Ascending aorta (tissue), 2 donors: ENCODE measurements at regions of chr14 and their contacts with region 1.

Region 1: DNA sequence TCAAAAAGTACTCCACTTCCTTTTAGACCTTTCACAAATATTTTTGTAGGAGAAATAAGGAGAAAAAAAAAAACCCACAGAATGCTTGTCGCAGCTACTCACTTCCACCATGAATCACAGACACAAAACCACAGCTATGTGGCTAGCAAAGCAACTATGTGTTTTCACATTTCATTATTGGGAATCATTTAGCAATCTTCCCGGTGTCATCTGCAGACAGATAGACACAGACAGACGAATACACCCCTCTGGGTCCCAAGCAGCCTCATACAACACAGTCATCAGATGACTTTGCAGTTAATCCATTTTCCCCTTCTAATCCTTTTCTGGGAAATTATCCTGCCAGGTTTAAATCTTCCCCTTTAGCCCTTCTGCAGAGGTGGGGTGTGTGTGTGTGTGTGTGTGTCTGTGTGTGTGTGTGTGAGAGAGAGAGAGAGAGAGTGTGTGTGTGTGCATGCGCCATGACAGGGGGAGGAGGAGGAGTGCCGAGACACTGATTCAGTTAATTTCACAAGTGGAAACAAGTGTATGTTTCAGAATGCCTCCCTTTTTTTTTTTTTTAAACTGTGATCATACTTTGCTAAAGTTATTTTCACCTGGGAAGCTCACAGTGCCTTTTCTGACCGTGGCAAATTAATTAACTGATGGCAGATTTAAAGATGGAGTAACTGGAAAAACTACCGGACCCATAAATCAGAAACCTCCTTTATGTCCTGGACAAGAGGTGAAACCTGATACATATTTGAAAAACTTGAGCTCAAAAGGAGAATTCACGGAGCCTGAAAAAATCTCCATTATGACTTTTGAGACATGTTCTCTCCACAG is 39.9 kb downstream of the LTBP2 start:
- DNase-seq: peak in 1 of 2 donors; percentile 83
- H3K4me3 ChIP-seq: peak overlapping the region; percentile 16 to 46
- H3K27ac ChIP-seq: peak overlapping the region; percentile 91 to 94
- H3K4me1 ChIP-seq: peaks cover 49 to 94% of the 10 kb centered on the region in 2 donors
- H3K27me3 ChIP-seq: no peaks in the 10 kb centered on the region
- CTCF ChIP-seq: no peak

Region 2: DNA sequence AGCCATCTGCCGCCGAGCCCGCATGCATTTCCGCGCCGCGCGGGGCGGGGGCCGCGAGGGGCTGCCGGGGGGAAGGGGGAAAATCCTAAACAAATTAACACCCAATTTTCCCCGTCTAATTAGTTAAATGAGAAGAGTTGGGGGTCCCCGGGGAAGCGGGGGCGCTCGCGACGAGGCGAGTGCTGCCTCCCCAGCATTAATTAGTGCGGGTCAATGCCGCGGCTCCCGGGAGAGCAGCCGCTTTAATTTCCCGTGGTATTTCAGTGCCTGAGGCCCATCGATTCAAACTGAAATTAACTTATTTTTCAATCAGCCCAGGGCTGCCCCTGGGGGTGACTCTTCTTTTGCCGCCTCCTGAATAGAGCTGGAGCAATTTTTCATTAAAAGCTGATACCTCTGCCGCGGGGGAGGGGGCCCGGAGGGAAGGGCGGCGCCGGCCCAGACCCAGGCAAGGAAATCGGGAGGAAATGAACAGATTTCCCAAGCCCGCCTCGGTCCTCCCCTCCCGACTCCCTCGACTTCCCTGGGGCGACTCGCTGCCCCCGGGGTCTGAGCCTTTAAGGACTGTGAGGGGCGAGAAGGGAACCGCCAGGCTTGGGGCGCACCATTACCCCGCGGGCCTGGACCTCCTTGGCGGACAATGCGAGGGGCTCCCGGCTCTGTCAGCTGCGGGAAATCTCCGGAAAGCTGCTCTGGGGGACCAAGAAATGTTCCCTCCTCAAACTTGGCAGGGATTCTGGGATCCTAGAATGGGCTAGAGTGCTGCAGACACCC is 313.9 kb before region 1 on chr14:
- intact Hi-C with region 1: no loop called
- DNase-seq: no peak
- H3K4me3 ChIP-seq: peak overlapping the region; percentile 64 to 81
- H3K27ac ChIP-seq: no peak overlapping the region
- H3K4me1 ChIP-seq: peaks cover 5 to 10% of the 10 kb centered on the region in 2 donors
- H3K27me3 ChIP-seq: peaks cover 4% of the 10 kb centered on the region
- CTCF ChIP-seq: no peak

Region 3: GRCh38 chr14:74583689-74584434 is 11.7 kb after region 1 on chr14:
- intact Hi-C with region 1: no loop called
- DNase-seq: no peak
- H3K4me3 ChIP-seq: no peak overlapping the region
- H3K27ac ChIP-seq: peak overlapping the region; percentile 91 to 94
- H3K4me1 ChIP-seq: peaks cover 46 to 88% of the 10 kb centered on the region in 2 donors
- H3K27me3 ChIP-seq: no peaks in the 10 kb centered on the region
- CTCF ChIP-seq: no peak

Region 4: DNA sequence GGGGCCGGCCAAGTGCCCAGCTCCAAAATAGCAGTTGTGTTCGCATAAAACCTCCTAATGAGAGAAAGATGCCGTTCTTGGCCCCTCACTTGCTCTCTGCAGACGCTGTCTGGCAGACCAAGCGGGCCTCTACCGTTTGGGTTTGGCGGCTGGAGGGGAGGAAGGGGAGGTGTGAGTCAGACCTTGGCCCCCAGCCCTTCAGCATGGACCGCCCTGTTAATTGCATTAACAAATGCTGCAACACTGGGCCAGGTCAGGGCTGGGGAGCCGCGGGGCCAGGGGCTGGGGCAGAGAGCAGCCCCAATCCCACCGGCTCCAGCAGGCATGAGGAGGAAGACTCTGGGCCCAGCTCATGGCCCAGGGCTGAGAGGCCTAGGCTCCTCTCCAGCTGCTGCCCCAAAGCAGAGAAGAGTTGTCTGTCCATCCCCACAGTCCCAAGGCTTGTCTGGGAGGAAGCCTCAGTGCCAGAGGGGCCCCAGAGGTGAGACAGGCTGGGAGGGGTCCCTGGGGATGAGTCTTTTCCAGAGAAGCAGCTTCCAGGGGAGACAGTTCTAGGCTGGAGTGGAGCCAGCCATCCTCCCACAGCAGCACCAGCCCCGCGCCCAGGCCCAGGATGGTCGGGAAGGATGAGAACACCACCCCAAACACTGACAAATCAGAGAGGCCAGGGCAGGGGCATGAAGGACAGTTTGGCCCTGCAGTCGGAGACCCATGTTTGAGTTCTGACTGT is 23.1 kb after region 1 on chr14:
- intact Hi-C with region 1: loop called (anchors 2 kb)
- DNase-seq: peak in 1 of 2 donors; percentile 84
- H3K4me3 ChIP-seq: peak overlapping the region in 1 of 2 donors; percentile 16
- H3K27ac ChIP-seq: peak overlapping the region; percentile 91 to 94
- H3K4me1 ChIP-seq: peaks cover 50 to 80% of the 10 kb centered on the region in 2 donors
- H3K27me3 ChIP-seq: no peaks in the 10 kb centered on the region
- CTCF ChIP-seq: no peak

Region 5: DNA sequence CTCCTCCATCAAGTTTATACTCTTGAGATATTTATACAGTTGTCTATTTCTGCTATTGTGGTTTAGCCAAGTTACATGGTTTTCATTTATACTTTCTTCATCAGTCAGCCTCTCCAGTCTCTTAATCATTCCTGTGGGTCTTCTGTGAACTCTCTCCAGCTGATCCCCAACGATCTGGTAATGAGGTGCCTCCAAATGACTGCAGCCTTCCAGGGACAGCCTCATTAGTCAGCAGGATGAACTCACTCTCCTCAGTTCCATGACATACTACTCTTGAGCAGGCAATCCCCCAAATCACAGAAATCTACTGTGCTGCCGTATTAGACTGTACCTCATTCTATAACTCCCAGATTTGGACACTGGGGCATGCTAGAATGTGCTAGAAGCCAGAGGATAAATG is 125.4 kb after region 1 on chr14:
- intact Hi-C with region 1: no loop called
- DNase-seq: no peak
- H3K4me3 ChIP-seq: no peak overlapping the region
- H3K27ac ChIP-seq: no peak overlapping the region
- H3K4me1 ChIP-seq: peaks cover 0 to 14% of the 10 kb centered on the region in 2 donors
- H3K27me3 ChIP-seq: no peaks in the 10 kb centered on the region
- CTCF ChIP-seq: no peak

Region 6: DNA sequence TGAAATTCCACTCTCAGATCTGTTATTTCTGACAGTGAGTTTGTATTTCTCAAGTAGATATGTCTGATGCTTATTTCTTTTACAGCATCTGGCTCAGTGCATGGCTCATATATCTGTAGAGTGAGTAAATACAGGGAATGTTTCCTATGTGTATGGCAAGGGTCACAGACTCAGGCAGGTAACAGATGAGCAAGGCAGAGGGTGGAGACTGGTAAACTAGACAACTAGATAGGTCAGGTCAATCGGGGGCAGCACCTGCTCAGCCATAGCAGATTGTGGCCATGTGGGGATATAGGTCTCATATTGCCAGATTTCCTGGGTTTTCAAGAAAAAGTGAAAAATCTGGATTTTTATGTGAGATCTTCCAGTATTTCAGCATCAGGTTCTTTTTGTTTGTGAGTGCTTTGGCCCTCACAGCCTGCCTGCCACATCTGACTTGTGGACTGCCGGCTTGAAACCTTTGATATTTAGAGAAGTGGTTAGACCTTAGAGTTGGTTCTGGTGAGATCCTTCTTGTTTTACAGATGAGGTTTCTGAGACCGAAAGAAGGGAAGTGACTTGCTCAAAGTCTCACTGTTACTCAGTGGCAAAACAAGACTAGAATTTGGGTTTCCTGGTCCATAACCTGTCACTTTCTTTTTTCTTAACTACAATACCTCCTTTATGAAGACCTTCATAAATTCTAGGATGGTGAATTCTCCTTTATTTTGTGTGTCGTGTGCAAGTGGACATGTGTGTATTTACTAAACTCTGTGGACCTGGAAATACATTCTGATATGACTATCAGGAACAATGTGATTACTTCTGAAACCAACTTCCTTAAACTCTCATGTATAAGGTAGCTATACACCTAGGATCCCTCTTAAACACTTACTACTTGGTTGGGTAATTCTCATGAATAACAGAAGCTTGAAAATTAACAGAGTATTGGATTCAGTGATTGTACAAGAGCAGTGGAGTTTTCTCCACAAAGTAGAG is 269.4 kb after region 1 on chr14:
- intact Hi-C with region 1: no loop called
- DNase-seq: no peak
- H3K4me3 ChIP-seq: no peak overlapping the region
- H3K27ac ChIP-seq: no peak overlapping the region
- H3K4me1 ChIP-seq: no peaks in the 10 kb centered on the region
- H3K27me3 ChIP-seq: no peaks in the 10 kb centered on the region
- CTCF ChIP-seq: no peak